ENCODE measurements at regions of chr19 and their contacts with region 1.

Region 1: DNA sequence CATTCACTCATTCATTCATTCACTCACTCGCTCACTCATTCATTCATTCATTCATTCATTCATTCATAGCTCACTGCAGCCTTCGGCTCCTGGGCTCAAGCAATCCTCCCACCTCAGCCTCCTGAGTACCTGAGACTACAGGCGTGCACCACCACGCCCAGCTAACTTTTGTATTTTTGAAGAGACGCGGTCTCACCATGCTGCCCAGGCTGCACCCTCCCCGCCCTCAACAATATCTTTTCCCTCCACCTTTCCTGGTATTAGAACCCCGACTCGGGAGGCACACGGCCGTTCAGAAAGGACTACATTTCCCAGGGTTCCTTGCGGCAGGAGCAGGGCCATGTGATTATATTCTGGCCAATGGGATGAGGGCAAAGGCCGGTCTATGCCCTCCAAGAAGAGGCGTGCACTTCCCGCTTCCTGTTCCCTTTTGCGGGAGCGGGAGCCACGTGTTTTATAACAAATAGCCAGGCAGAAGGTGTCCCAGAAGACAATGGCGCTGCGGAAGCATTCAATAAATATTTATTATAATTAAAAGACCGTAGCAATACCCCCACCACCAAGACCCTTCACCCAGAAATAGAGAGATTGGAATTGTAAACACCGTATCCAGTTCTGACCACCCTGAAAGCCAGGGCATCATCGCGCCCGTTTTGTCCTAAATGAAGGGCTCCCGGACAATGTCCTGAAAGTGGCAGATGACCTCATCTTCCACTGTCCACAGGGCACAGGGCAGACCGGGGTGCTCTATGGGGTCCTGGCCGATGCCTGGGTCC is 15.9 kb downstream of the TICAM1 start:
- DNase-seq: peak; percentile 86 to 91
- H3K4me3 ChIP-seq: peak overlapping the region in 2 of 3 donors; percentile 25 to 50
- H3K27ac ChIP-seq: peak overlapping the region; percentile 40 to 75
- H3K4me1 ChIP-seq: no peaks in the 10 kb centered on the region
- H3K27me3 ChIP-seq: no peaks in the 10 kb centered on the region
- CTCF ChIP-seq: no peak
- POLR2A ChIP-seq: no peak

Region 2: DNA sequence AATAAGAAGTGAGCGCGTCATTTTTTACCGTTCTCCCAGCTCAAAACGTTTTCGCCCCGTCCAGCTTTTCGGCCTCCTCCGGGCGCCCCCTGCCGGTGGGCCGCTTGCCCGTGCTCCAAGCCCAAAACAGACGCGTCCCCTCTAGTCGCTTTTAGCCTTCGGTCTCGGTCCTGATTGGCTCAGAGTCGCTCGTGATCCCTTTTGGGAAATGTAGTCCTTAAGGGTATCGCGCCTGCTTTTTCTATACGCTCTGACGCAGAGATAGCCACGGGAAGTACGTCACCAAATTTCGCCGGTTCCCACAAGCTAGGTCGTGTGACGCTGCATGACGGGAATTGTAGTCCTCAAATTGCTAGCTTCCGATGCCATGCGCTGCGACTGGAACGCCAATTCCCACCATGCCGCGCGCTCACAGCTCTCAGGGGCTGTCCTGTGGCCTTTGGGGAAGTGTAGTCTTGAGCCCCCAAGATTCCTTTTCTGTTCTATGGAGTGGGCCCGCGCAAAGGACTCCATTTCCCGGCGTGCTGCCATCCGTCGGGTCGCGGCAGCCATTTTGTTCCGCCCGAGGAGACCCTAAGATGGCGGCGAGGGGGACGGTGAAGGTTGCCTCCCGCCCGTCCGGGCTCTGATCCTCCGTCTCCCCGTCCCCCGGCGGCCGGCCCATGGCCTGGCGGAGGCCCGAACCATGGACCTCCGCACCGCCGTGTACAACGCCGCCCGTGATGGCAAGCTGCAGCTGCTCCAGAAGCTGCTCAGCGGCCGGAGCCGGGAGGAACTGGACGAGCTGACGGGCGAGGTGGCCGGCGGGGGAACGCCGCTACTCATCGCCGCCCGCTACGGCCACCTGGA is 24.2 kb before region 1 on chr19 and contains the start of gene FEM1A:
- intact Hi-C with region 1: no loop called
- DNase-seq: peak; percentile 99 to 100
- H3K4me3 ChIP-seq: peak within 1 kb of the TSS; percentile 74 to 91 (median 85)
- H3K27ac ChIP-seq: peak within 1 kb of the TSS; percentile 89 to 93
- H3K4me1 ChIP-seq: peaks cover 3 to 12% of the 10 kb centered on the region in 2 donors
- H3K27me3 ChIP-seq: no peaks in the 10 kb centered on the region
- CTCF ChIP-seq: peak; percentile 99 to 100 (median 99)
- POLR2A ChIP-seq: peak; percentile 74
- total RNA-seq, gene FEM1A: 10.4 to 17.6 (median 12.5) TPM

Region 3: GRCh38 chr19:4867534-4868285 is 52.1 kb after region 1 on chr19 and contains the start of gene PLIN3:
- intact Hi-C with region 1: loop called (anchors 10 kb)
- DNase-seq: peak; percentile 97 to 99
- H3K4me3 ChIP-seq: peak within 1 kb of the TSS; percentile 87 to 95 (median 93)
- H3K27ac ChIP-seq: peak within 1 kb of the TSS; percentile 90 to 97
- H3K4me1 ChIP-seq: no peaks in the 10 kb centered on the region
- H3K27me3 ChIP-seq: no peaks in the 10 kb centered on the region
- CTCF ChIP-seq: no peak
- POLR2A ChIP-seq: no peak
- total RNA-seq, gene PLIN3: 50.1 to 77.3 (median 53.8) TPM